Naive thymus-derived CD4-positive, alpha-beta T cell (primary cell): ENCODE measurements at regions of chr13 and their contacts with region 1.

Region 1: DNA sequence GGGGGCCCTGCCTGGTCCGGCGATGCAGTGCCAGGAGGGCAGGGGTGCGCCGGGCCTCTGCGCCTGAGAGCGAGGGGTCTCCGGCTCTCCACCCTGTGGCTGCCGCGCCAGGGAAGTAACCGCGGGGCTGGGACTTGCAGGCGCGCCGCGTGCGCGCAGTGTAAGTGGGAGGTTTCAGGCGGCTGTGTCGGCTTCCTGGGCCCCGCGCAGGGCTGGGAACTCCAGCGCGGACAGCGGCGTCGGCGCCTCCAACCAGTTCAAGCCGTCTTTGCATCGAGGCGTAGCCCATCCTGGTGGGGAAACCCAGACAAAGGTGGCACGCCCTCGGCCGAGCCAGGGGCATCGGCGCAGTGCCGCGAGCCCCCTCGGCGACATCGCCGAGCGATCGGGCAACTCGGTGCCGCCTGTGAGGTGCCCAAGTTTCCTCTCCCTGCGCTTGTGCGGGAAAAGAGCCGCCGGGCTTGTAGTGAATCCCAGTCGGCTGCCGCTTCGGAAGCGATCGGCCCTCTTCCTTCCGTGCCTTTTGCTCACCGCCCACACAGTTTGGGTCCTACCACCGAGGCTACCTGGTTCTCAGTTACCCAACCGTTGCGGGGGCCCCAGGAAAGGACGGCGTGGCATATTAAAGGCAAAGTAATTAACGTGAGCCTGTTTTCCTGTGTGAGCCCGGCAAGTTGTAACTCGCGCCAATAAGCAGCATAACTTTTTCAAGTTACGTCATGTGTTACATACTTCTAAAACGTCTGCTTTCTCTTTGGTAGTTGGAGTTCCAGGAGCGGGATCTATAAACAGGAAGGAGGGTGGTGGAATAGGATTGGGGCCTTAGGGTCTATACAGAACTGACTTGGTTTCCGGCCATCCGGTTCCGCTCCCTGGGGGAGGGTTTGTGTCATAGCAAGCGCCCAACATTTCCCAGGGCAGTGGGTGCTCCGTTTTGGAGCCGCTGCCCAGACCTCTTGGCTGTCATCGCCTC is 1.2 kb downstream of the LRCH1 start:
- DNase-seq: peak; percentile 52 to 77 (median 64)
- ATAC-seq: peak; percentile 77
- H3K4me3 ChIP-seq: peak overlapping the region; percentile 90
- H3K4me3 Mint-ChIP-seq: peak overlapping the region; percentile 92 to 99 (median 95)
- H3K27ac ChIP-seq: peak overlapping the region; percentile 82
- H3K27ac Mint-ChIP-seq: peak overlapping the region; percentile 70 to 96 (median 88)
- H3K4me1 ChIP-seq: peaks cover 26 to 29% of the 10 kb centered on the region in 2 donors
- H3K4me1 Mint-ChIP-seq: peaks cover 32 to 61% (median 55%) of the 10 kb centered on the region in 7 donors
- H3K27me3 ChIP-seq: no peaks in the 10 kb centered on the region
- H3K27me3 Mint-ChIP-seq: peaks cover 0 to 5% (median 0%) of the 10 kb centered on the region in 5 donors

Region 2: DNA sequence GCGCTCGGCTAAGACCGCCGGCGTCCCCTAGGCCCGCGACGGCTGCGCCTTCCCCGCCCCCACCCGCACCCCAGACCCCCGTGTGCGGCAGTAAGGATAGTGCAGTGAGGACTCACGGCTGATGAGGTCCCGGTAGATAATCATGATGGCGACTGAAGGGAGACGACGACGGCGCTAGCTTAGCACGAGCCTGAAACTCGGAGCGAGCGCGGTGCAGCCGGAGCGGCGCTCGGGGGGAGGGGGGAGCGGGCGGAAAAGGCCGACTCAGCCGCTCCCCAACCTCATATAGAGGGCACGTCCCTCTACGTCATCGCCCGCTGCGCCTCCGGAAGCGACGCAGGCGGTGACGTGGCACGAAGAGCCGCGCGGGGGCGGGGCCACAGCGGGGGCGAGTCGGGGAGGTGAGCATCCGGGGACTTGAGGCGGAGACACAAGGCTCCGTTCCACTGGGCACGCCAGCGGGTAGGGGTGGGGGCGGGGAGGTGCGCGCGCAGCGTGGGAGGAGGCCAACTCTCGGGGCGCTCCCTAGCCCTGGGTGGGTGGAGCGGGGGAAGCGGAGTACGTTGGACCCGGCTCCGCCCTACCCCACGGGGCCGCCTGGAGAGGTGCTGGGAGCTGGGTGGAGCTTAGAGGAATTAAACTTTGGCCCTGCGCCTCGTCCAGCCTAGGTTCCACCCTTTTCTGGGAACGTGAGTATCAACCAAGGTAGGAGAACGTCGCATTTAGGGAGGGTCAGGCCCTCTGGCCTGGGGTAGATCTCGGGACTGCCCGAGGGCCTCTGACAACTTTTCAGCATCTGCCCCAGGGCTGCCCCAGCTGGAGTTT is 1213.0 kb before region 1 on chr13 and contains the start of gene TPT1:
- CTCF ChIA-PET with region 1: no interaction called
- POLR2A ChIA-PET with region 1: no interaction called
- intact Hi-C with region 1: loop called in 1 of 2 experiments (anchors 1 kb)
- DNase-seq: peak; percentile 99 to 100 (median 99)
- ATAC-seq: peak; percentile 91
- H3K4me3 ChIP-seq: peak within 1 kb of the TSS; percentile 94
- H3K4me3 Mint-ChIP-seq: peak within 1 kb of the TSS; percentile 95 to 100 (median 98)
- H3K27ac ChIP-seq: peak within 1 kb of the TSS; percentile 99
- H3K27ac Mint-ChIP-seq: peak within 1 kb of the TSS; percentile 92 to 100 (median 99)
- H3K4me1 ChIP-seq: peaks cover 35 to 43% of the 10 kb centered on the region in 2 donors
- H3K4me1 Mint-ChIP-seq: peaks cover 35 to 70% (median 57%) of the 10 kb centered on the region in 7 donors
- H3K27me3 ChIP-seq: no peaks in the 10 kb centered on the region
- H3K27me3 Mint-ChIP-seq: no peaks in the 10 kb centered on the region
- total RNA-seq, gene TPT1: 4,230 to 13,134 (median 7,796) TPM

Region 3: GRCh38 chr13:46184277-46184699 is 369.9 kb before region 1 on chr13:
- CTCF ChIA-PET with region 1: no interaction called
- POLR2A ChIA-PET with region 1: no interaction called
- intact Hi-C with region 1: loop called in 1 of 2 experiments (anchors 10 kb)
- DNase-seq: peak in 8 of 9 donors; percentile 60 to 74 (median 69)
- ATAC-seq: peak; percentile 75
- H3K4me3 ChIP-seq: peak overlapping the region; percentile 83
- H3K4me3 Mint-ChIP-seq: peak overlapping the region; percentile 67 to 99 (median 85)
- H3K27ac ChIP-seq: peak overlapping the region; percentile 82
- H3K27ac Mint-ChIP-seq: peak overlapping the region; percentile 86 to 99 (median 96)
- H3K4me1 ChIP-seq: peaks cover 27 to 35% of the 10 kb centered on the region in 2 donors
- H3K4me1 Mint-ChIP-seq: peaks cover 35 to 48% (median 38%) of the 10 kb centered on the region in 7 donors
- H3K27me3 ChIP-seq: no peaks in the 10 kb centered on the region
- H3K27me3 Mint-ChIP-seq: peaks cover 0 to 3% (median 0%) of the 10 kb centered on the region in 5 donors

Region 4: DNA sequence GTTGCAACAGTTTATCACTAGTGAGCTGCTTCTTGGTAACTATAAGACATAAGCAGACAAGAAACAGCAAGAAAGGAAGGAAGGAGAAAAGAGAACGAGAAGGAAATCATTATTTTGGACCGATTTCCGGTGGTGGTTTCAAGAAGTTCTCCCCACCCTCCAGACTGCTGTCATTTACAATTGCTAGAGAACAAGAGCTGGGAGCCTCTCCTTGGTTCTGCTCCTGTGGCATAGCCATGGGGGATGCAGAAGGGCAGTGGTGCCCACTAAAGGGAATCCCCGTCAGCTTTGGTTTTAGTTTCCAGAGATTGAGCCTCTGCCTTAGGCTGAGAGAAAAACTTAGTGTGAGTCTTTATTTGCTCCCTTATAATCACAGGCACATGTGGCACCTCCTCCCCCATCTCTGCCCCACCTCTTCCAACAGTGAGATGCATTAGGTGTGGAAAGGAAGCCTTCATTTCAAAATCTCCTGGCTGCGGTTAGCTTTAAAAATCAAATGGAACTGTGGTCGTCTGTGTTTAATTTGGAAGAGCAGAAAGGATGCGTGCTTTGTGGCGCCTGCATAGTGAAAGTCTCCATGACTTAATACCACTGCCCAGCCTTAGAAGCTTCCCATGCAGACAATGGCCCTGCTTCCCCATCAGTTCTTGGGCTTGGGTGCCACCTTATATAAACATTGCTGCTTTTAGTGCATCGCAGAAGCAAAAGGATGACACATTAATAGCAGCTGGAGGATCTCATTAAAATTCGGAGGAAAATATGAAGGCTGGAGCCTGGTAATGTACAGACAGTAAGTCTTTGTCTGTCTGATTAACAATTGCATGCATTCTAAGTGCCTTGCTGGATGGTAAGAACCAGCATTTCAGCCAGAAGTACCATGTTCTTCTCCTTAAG is 23.8 kb after region 1 on chr13:
- CTCF ChIA-PET with region 1: interaction called, 5 read pairs
- POLR2A ChIA-PET with region 1: interaction called, 6 read pairs
- intact Hi-C with region 1: loop called in 1 of 2 experiments (anchors 1 kb)
- DNase-seq: no peak
- ATAC-seq: peak; percentile 32
- H3K4me3 ChIP-seq: no peak overlapping the region
- H3K4me3 Mint-ChIP-seq: peak overlapping the region in 7 of 10 donors; percentile 10 to 66 (median 46)
- H3K27ac ChIP-seq: no peak overlapping the region
- H3K27ac Mint-ChIP-seq: peak overlapping the region in 5 of 9 donors; percentile 1 to 81 (median 9)
- H3K4me1 ChIP-seq: peaks cover 3 to 11% of the 10 kb centered on the region in 2 donors
- H3K4me1 Mint-ChIP-seq: peaks cover 36 to 82% (median 67%) of the 10 kb centered on the region in 7 donors
- H3K27me3 ChIP-seq: no peaks in the 10 kb centered on the region
- H3K27me3 Mint-ChIP-seq: no peaks in the 10 kb centered on the region

Region 5: GRCh38 chr13:46613409-46614049 is 59.4 kb after region 1 on chr13:
- CTCF ChIA-PET with region 1: no interaction called
- POLR2A ChIA-PET with region 1: no interaction called
- intact Hi-C with region 1: no loop called
- DNase-seq: no peak
- ATAC-seq: no peak
- H3K4me3 ChIP-seq: no peak overlapping the region
- H3K4me3 Mint-ChIP-seq: no peak overlapping the region
- H3K27ac ChIP-seq: no peak overlapping the region
- H3K27ac Mint-ChIP-seq: peak overlapping the region in 1 of 9 donors; percentile 25
- H3K4me1 ChIP-seq: peaks cover 0 to 4% of the 10 kb centered on the region in 2 donors
- H3K4me1 Mint-ChIP-seq: peaks cover 18 to 54% (median 43%) of the 10 kb centered on the region in 7 donors
- H3K27me3 ChIP-seq: no peaks in the 10 kb centered on the region
- H3K27me3 Mint-ChIP-seq: no peaks in the 10 kb centered on the region

Region 6: DNA sequence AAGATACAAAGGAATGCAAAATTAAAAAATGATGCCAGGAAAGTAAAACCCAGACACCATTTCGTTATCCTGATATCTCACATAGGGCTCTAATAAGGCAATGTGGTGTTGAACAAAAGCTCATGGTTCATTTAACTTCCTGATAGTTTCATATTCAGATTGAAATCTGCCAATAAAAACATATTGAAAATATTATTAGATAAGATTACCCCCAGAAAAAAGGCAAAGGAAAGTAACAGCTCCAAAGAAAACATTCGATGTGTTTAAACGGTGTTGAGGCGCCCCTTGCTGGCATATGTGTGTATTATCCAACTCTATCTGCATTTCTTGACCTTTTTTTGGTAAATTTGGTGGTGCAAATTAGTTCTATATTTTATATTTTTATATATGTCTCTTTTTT is 166.9 kb after region 1 on chr13:
- CTCF ChIA-PET with region 1: interaction called, 53 read pairs
- POLR2A ChIA-PET with region 1: no interaction called
- intact Hi-C with region 1: loop called (anchors 1 kb)
- DNase-seq: peak in 7 of 9 donors; percentile 10 to 54 (median 44)
- ATAC-seq: peak; percentile 61
- H3K4me3 ChIP-seq: no peak overlapping the region
- H3K4me3 Mint-ChIP-seq: no peak overlapping the region
- H3K27ac ChIP-seq: no peak overlapping the region
- H3K27ac Mint-ChIP-seq: no peak overlapping the region
- H3K4me1 ChIP-seq: no peaks in the 10 kb centered on the region
- H3K4me1 Mint-ChIP-seq: peaks cover 0 to 5% (median 0%) of the 10 kb centered on the region in 7 donors
- H3K27me3 ChIP-seq: no peaks in the 10 kb centered on the region
- H3K27me3 Mint-ChIP-seq: no peaks in the 10 kb centered on the region

Region 7: DNA sequence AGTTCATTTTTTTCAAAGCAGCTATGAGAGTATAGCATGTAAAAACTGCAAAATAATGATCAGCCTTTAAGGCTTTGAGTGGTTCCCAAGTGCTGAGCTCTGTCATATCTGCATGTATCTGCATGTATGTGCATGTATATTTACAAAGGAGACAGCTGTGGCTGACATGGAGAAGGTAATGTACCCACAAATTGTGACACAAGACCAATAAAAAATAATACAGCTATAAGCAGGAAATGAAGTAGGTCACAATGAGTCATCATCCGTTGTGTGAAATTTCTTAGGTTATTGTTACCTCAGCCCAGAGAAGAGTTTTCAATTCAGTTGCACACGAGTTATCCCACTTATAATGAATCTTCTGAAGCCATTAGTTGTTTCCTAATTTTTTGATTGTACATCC is 1601.7 kb after region 1 on chr13:
- CTCF ChIA-PET with region 1: no interaction called
- POLR2A ChIA-PET with region 1: no interaction called
- intact Hi-C with region 1: loop called in 1 of 2 experiments (anchors 5 kb)
- DNase-seq: peak in 7 of 9 donors; percentile 49 to 81 (median 74)
- ATAC-seq: peak; percentile 88
- H3K4me3 ChIP-seq: peak overlapping the region; percentile 34
- H3K4me3 Mint-ChIP-seq: peak overlapping the region; percentile 62 to 83 (median 74)
- H3K27ac ChIP-seq: peak overlapping the region; percentile 75
- H3K27ac Mint-ChIP-seq: peak overlapping the region; percentile 89 to 99 (median 92)
- H3K4me1 ChIP-seq: peaks cover 28 to 64% of the 10 kb centered on the region in 2 donors
- H3K4me1 Mint-ChIP-seq: peaks cover 47 to 89% (median 78%) of the 10 kb centered on the region in 7 donors
- H3K27me3 ChIP-seq: no peaks in the 10 kb centered on the region
- H3K27me3 Mint-ChIP-seq: no peaks in the 10 kb centered on the region